ENCODE measurements at regions of chr5 and their contacts with region 1.

Region 1: GRCh38 chr5:123423278-123424149 is at the start of gene CEP120:
- H3K4me3 ChIP-seq: peak within 1 kb of the TSS; percentile 85
- H3K27ac ChIP-seq: peak within 1 kb of the TSS; percentile 84
- H3K4me1 ChIP-seq: peaks cover 3% of the 10 kb centered on the region; the same call in 1 of the 2 replicates
- CTCF ChIP-seq: peak; percentile 97

Region 2: GRCh38 chr5:123294544-123294943 is 129.0 kb before region 1 on chr5:
- CTCF ChIA-PET with region 1: no interaction called
- POLR2A ChIA-PET with region 1: no interaction called
- H3K4me3 ChIP-seq: no peak overlapping the region
- H3K27ac ChIP-seq: no peak overlapping the region
- H3K4me1 ChIP-seq: no peaks in the 10 kb centered on the region
- CTCF ChIP-seq: no peak

Region 3: GRCh38 chr5:123436201-123436600 is 12.7 kb after region 1 on chr5:
- CTCF ChIA-PET with region 1: interaction called, 11 read pairs
- POLR2A ChIA-PET with region 1: interaction called, 3 read pairs
- H3K4me3 ChIP-seq: no peak overlapping the region
- H3K27ac ChIP-seq: no peak overlapping the region
- H3K4me1 ChIP-seq: peaks cover 6% of the 10 kb centered on the region
- CTCF ChIP-seq: no peak

Region 4: GRCh38 chr5:123441408-123441807 is 17.9 kb after region 1 on chr5:
- CTCF ChIA-PET with region 1: interaction called, 11 read pairs
- POLR2A ChIA-PET with region 1: interaction called, 3 read pairs
- H3K4me3 ChIP-seq: no peak overlapping the region
- H3K27ac ChIP-seq: no peak overlapping the region
- H3K4me1 ChIP-seq: 0 out of 2 replicates have a peak, but pooled peaks cover 3% of the 10 kb centered on the region
- CTCF ChIP-seq: no peak

Region 5: DNA sequence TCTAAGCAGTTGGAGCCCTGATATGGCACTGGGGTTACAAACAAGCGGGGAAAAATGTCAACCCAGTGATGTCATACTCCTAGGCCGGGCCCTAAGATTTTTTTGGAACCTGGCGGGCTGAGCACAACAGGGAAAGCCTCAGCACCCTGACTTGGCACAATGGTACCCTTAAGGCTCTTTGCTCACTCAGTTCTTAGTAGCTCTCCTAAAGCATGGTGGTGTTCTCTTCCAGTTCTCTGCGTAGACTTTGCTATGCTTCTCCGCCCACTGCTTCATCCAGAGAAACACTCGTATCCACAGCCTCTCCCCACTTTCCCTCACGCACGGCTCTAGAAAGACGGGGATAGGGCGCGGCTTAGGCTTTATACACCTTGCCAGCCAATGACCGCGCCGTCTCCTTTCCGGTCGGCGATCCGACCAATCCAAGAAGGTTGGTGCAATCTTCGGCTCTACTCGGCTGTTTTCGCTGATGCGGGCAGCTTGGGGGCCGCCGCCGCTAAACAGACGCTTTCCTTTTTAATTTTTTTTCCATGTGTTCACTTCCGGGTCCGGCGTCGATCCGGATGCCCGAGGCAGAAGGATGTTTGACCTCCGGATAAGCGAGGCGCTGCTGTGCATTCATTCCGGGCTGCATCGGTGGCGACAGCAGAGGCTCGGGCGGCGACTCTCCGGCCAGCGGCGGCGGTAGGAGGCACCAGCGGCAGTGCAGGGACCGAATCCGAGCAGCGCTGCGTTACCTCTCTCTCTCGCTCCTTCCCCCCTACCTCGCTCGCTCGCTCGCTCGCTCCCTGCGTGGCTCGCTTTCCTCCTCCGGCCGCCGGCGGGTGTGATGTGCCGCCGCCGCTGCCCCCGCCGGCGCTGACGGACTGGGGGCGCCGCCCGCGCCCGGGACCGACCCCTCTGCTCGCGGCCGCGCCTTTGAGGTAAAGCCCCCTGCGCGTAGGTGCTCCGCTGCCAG is 88.4 kb after region 1 on chr5 and contains the start of gene CSNK1G3:
- CTCF ChIA-PET with region 1: interaction called, 4 read pairs
- POLR2A ChIA-PET with region 1: interaction called, 67 read pairs
- H3K4me3 ChIP-seq: peak within 1 kb of the TSS; percentile 99
- H3K27ac ChIP-seq: peak within 1 kb of the TSS; percentile 95
- H3K4me1 ChIP-seq: peaks cover 22% of the 10 kb centered on the region
- CTCF ChIP-seq: peak; percentile 65; the same call in 1 of the 2 replicates

Region 6: DNA sequence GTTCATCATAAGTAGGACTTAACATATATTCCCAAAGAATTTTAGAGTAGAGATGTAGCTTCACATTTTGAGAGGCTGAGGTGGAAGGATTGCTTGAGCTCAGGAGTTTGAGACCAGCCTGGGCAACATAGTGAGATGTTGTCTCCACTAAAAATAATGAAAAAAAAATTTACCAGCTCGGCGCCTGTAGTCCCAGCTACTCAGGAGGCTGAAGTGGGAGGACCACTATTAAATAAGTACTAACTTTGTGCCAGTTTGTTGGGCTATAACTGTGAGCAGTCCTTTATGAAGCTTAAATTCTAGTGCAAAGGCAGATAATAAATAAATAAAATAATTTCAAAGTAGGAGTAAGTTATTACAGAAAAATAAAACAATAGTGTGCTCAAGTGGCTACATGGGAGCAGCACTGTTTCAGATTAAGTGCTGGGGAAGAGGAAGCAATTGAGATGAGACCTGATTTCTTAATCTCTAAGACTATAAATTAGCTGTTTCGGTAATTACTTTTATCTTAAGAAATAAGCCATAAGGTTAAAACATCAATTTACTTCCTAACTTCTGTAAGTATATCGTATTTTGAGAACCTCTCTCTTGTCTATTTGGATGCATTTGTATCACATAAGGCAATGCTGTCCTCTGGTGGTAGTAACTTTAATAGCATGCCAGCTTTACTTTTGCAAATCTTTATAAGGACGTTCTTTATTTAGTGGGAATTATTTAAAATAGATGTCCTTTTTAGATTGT is 187.3 kb after region 1 on chr5:
- CTCF ChIA-PET with region 1: interaction called, 14 read pairs
- POLR2A ChIA-PET with region 1: interaction called, 11 read pairs
- H3K4me3 ChIP-seq: no peak overlapping the region
- H3K27ac ChIP-seq: no peak overlapping the region
- H3K4me1 ChIP-seq: no peaks in the 10 kb centered on the region
- CTCF ChIP-seq: peak; percentile 71

Measured in HEK293 (cell line).